Mammary epithelial cell (primary cell): ENCODE measurements at regions of chr10 and their contacts with region 1.

Region 1: DNA sequence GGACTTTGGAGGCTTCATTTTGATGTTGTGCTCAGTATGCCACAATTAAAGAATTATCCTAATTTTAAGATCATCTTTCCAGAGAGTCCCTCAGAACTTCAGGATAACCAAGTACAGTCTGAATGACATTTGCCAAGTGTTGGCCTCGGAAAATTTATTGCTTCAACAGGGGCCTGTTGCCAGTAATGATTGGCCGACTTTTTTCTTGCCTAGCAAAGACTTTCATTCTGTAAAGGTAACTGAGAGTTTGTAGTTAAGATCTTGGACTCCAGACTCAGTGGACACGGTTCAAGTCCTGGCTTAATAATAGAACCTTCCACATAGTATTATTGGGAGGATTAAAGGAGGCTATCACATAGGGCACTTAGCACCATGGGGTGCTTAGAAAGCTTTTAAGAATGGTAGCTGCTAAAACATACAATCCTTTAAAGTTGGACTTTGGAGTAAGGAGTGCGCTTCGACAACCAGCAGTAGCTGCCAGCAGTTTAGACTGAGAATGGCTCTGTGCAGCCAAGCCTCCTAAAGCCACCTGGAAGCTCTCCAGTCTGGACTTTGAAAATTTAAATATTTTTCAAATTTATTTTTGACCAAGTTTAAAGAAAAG is 90.0 kb downstream of the PLCE1 start:
- DNase-seq: no peak
- H3K4me3 ChIP-seq: no peak overlapping the region
- H3K27ac ChIP-seq: no peak overlapping the region
- H3K4me1 ChIP-seq: no peaks in the 10 kb centered on the region
- H3K27me3 ChIP-seq: no peaks in the 10 kb centered on the region
- CTCF ChIP-seq: no peak

Region 2: DNA sequence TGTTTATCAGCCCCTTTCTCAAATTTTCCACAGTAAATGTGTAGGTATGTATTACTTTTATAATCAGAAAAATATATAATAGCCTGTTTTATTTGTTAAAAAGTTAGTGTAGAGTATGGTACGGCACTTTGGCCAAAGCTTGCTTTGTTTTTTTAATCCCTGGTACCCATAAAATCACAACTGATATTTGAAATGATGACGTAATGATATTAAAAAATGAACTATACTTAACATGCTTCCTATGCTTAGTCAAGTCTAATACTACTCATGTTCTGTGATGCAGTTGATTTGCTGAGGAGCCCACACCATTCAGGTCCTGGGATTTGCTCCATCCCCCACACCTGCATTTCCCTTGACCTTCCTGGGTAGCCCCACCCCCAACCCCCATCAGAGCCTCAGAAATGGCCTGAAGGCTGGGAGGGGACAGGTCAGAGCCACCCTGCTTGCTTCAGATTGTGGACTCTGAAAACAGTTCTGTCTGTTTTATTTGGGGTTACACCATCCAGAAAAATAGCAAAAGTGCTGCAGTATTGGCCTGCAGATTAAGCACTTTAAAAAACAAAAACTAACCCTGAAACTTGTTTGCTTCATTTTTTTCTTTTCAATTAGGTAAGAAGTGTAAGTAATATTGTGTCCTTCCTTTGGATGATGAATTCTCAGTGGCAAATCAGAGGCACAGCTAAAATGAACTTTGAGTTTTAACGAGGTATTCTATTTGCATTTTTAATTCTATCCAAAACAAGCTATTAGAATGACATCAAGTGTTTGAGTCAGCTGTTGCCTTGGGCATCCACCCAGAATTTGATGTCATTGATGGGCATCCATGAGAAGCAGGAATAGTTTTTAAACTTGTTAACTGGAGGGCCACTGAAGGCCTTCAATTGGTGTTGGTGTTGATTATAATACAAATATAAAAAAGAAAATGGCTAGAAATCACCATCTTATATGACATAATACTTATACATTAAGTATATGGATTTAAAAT is 66.7 kb before region 1 on chr10:
- CTCF ChIA-PET with region 1: no interaction called
- dilution Hi-C with region 1: loop called (anchors 5 kb)
- in situ Hi-C with region 1: no loop called
- intact Hi-C with region 1: no loop called
- DNase-seq: no peak
- H3K4me3 ChIP-seq: no peak overlapping the region
- H3K27ac ChIP-seq: no peak overlapping the region
- H3K4me1 ChIP-seq: no peaks in the 10 kb centered on the region
- H3K27me3 ChIP-seq: no peaks in the 10 kb centered on the region
- CTCF ChIP-seq: no peak

Region 3: GRCh38 chr10:94129393-94130130 is 45.8 kb after region 1 on chr10:
- CTCF ChIA-PET with region 1: no interaction called
- dilution Hi-C with region 1: loop called (anchors 5 kb)
- in situ Hi-C with region 1: no loop called
- intact Hi-C with region 1: no loop called
- DNase-seq: no peak
- H3K4me3 ChIP-seq: no peak overlapping the region
- H3K27ac ChIP-seq: no peak overlapping the region
- H3K4me1 ChIP-seq: no peaks in the 10 kb centered on the region
- H3K27me3 ChIP-seq: no peaks in the 10 kb centered on the region
- CTCF ChIP-seq: no peak